ENCODE measurements at regions of chr12 and their contacts with region 1.

Region 1: GRCh38 chr12:122951979-122952892 is 14.0 kb downstream of the ABCB9 start:
- DNase-seq: peak; percentile 51 to 81 (median 63)
- H3K4me3 ChIP-seq: no peak overlapping the region
- H3K4me3 Mint-ChIP-seq: no peak overlapping the region
- H3K27ac ChIP-seq: no peak overlapping the region
- H3K27ac Mint-ChIP-seq: peak overlapping the region in 2 of 8 donors; percentile 14 to 17
- H3K4me1 ChIP-seq: peaks cover 1% of the 10 kb centered on the region
- H3K4me1 Mint-ChIP-seq: peaks cover 5 to 9% (median 8%) of the 10 kb centered on the region in 3 donors
- H3K27me3 ChIP-seq: no peaks in the 10 kb centered on the region
- H3K27me3 Mint-ChIP-seq: no peaks in the 10 kb centered on the region

Region 2: GRCh38 chr12:122459211-122459610 is 493.0 kb before region 1 on chr12:
- CTCF ChIA-PET with region 1: no interaction called
- POLR2A ChIA-PET with region 1: no interaction called
- DNase-seq: no peak
- H3K4me3 ChIP-seq: no peak overlapping the region
- H3K4me3 Mint-ChIP-seq: no peak overlapping the region
- H3K27ac ChIP-seq: no peak overlapping the region
- H3K27ac Mint-ChIP-seq: peak overlapping the region in 1 of 8 donors; percentile 46
- H3K4me1 ChIP-seq: peaks cover 2% of the 10 kb centered on the region
- H3K4me1 Mint-ChIP-seq: peaks cover 8 to 18% (median 10%) of the 10 kb centered on the region in 3 donors
- H3K27me3 ChIP-seq: no peaks in the 10 kb centered on the region
- H3K27me3 Mint-ChIP-seq: no peaks in the 10 kb centered on the region

Region 3: DNA sequence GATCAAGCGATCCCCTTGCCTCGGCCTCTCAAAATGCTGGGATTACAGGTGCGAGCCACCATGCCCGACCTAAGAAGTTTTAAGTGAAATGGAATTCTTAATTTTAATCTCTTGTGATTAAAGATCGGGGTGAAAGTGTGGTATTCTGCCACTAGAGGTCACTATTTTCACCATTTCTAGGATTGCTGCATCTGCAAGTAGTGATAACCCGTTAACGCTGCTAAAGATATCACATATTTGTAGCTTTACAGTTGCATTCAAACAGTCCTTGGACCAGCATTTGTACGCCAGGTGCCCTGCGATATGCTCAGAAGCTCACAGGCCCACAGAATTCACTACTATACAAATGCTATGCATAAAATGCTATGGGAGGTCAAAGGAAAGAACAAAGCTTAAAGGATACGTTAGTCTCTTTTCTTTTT is 158.5 kb before region 1 on chr12:
- CTCF ChIA-PET with region 1: interaction called, 45 read pairs
- POLR2A ChIA-PET with region 1: no interaction called
- DNase-seq: peak in 2 of 5 donors; percentile 46 to 66
- H3K4me3 ChIP-seq: no peak overlapping the region
- H3K4me3 Mint-ChIP-seq: no peak overlapping the region
- H3K27ac ChIP-seq: no peak overlapping the region
- H3K27ac Mint-ChIP-seq: peak overlapping the region in 1 of 8 donors; percentile 81
- H3K4me1 ChIP-seq: peaks cover 4% of the 10 kb centered on the region
- H3K4me1 Mint-ChIP-seq: peaks cover 3 to 5% (median 4%) of the 10 kb centered on the region in 3 donors
- H3K27me3 ChIP-seq: no peaks in the 10 kb centered on the region
- H3K27me3 Mint-ChIP-seq: peaks cover 0 to 1% of the 10 kb centered on the region in 2 donors

Region 4: DNA sequence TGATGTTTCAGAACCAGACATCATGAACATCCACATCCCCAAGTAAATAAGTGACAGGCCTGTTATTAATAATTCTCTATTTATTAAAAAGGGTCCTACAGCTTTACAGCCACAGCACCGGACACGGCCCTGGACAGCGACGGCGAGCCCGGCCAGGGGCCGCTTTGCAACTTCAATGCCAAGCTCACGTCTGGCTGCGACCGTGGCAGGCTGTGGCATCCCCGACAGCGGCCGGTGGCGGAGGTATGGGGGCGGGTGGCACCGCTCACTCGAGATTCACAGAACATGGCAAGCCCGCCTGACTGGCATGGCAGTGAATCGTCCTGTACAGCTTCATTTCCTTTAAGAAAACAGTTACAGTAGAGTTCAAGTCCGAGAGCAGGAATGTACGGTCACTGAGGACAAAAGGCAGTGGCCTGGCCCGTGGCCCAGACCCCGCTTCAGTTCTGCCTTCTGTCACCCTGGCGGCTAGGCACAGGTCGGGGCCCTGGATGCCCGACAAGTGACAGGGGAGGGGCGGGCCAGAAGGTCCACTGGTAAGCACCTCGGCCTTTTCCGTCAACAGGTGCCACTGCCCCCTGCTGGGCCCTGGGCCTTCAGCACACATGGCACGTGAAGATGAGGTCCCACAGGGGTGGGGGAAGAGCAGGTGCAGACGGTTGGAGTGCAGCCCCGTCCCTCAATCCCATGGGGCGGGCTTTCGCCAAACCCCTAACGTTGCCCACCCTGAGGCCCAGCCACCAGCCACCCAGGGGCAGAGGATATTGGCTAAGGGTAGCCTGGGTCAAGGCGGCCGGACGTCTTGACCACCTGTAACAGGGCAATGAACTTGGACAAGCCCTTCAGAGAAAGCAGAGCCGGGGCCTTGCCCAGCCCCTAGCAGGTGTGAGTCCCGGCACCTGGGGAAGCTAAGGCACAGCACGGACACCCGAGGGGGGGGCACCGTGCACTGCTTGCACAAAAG is 86.7 kb before region 1 on chr12:
- CTCF ChIA-PET with region 1: interaction called, 162 read pairs
- POLR2A ChIA-PET with region 1: no interaction called
- DNase-seq: peak in 1 of 5 donors; percentile 51
- H3K4me3 ChIP-seq: no peak overlapping the region
- H3K4me3 Mint-ChIP-seq: no peak overlapping the region
- H3K27ac ChIP-seq: no peak overlapping the region
- H3K27ac Mint-ChIP-seq: peak overlapping the region in 4 of 8 donors; percentile 41 to 69 (median 64)
- H3K4me1 ChIP-seq: peaks cover 14% of the 10 kb centered on the region
- H3K4me1 Mint-ChIP-seq: peaks cover 11 to 29% (median 20%) of the 10 kb centered on the region in 3 donors
- H3K27me3 ChIP-seq: no peaks in the 10 kb centered on the region
- H3K27me3 Mint-ChIP-seq: no peaks in the 10 kb centered on the region

Region 5: DNA sequence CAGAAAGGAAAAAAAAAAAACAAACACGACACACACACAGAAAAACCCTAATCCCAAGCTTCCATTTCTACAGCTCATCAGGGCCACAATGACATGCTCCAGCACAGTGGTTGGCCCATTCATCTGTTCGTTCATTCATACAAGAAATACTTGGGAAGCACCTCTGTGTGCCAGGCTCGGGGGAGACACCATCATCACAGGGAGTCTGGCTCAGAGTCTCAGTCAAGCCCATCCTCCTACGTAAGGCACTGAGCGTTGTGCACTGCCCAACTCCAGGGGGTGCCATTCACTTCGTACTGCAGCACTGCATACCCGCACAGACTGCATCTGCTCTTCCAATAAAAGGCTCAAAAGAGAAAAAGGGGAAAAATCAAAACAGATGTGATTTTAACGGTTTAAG is 71.6 kb before region 1 on chr12:
- CTCF ChIA-PET with region 1: interaction called, 13 read pairs
- POLR2A ChIA-PET with region 1: no interaction called
- DNase-seq: no peak
- H3K4me3 ChIP-seq: no peak overlapping the region
- H3K4me3 Mint-ChIP-seq: peak overlapping the region in 2 of 7 donors; percentile 14 to 58
- H3K27ac ChIP-seq: no peak overlapping the region
- H3K27ac Mint-ChIP-seq: peak overlapping the region; percentile 40 to 97 (median 80)
- H3K4me1 ChIP-seq: peaks cover 66% of the 10 kb centered on the region
- H3K4me1 Mint-ChIP-seq: peaks cover 87 to 96% (median 94%) of the 10 kb centered on the region in 3 donors
- H3K27me3 ChIP-seq: no peaks in the 10 kb centered on the region
- H3K27me3 Mint-ChIP-seq: no peaks in the 10 kb centered on the region